ENCODE measurements at regions of chr4 and their contacts with region 1.

Region 1: DNA sequence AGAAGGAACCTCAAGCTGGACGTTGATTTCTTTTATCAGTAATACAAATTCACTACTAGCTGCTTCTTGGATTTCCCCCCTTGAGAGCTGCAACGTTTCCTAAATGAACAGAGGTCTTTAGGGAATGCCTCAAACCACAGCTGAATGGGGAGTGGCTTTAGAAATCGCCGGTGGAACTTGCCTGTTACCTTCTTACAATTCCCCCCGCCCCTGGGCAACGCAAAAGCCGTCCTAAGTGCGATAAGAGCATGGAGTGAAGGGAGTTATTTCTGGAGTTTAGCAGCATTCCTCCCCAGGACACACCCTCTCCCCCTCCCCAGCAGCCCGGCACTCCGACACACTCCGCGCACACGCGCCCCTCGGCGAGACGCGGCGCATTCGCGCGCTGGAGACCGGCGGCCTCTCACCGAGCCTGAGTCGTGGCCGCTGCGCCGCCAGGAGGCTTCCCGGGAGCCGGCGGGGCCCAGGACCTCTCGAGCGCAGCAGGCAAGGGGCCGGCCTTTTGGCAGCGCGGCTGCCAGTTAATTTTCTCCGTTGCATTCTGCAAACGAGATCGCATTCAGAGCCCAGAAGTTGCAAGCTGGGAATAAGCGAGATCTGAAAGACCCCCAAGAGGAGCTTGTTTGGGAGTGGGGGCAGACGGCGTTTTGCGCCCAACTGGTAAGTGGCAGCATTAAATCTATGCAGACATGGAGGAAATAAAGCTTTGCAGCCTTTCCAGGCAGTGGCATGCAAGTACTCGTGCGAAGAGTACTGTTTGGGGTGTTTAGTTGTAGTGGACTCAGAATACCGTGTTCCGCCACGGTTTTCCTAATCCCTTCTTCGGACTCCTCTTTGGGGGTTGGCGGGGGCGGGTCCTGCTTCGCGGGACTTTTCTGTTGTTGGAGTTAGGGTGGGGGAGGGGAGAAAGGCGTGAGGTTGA is 134.7 kb downstream of the PALLD start:
- DNase-seq: peak; percentile 76 to 82
- H3K4me3 ChIP-seq: peak overlapping the region; percentile 54 to 68
- H3K27ac ChIP-seq: peak overlapping the region; percentile 92
- H3K4me1 ChIP-seq: peaks cover 0 to 5% of the 10 kb centered on the region in 2 donors
- H3K27me3 ChIP-seq: no peaks in the 10 kb centered on the region
- CTCF ChIP-seq: peak; percentile 26 to 69 (median 54)
- POLR2A ChIP-seq: peak in 1 of 2 donors; percentile 53

Region 2: GRCh38 chr4:168291242-168291641 is 340.3 kb before region 1 on chr4:
- intact Hi-C with region 1: no loop called
- DNase-seq: no peak
- H3K4me3 ChIP-seq: no peak overlapping the region
- H3K27ac ChIP-seq: no peak overlapping the region
- H3K4me1 ChIP-seq: no peaks in the 10 kb centered on the region
- H3K27me3 ChIP-seq: no peaks in the 10 kb centered on the region
- CTCF ChIP-seq: no peak
- POLR2A ChIP-seq: no peak

Region 3: DNA sequence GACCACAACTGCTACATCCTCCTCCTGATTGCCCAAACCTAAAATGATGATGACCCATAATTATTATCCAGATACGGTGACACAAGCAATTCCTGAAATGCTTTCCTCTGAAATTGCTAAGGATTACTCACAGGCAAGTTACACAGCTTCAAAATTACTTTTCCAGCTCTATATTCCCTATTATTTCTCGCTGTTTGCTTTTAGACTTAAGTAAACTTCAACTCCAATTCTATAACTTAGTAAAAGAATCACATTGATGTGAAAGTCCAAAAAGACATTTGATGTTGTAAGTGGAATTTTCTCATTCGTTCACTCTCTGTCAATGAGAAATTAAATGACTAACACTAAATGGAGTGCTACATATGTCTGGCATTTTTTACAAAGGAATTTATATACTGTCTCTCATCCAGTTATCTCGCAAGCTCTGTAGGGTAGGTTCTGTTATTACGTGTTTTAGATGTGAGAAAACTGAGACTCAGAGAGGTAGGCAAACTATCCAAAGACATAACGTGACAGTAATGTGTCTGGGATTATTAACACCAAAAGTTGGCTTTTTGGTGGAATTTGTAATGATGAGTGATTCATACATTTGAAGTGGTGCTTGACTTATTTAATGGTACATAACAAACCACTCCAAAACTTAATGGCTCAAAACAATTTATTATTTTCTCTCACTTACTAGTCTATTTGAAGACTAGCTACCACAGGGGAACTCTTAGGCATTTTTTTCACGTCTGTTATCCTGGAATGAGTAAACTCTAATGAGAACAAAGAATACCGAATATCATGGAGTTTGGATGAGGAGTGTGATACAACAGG is 103.2 kb before region 1 on chr4:
- intact Hi-C with region 1: no loop called
- DNase-seq: no peak
- H3K4me3 ChIP-seq: no peak overlapping the region
- H3K27ac ChIP-seq: no peak overlapping the region
- H3K4me1 ChIP-seq: no peaks in the 10 kb centered on the region
- H3K27me3 ChIP-seq: no peaks in the 10 kb centered on the region
- CTCF ChIP-seq: no peak
- POLR2A ChIP-seq: no peak

Region 4: GRCh38 chr4:168831919-168832762 is 200.6 kb after region 1 on chr4:
- intact Hi-C with region 1: loop called (anchors 10 kb)
- DNase-seq: peak; percentile 89 to 93
- H3K4me3 ChIP-seq: peak overlapping the region; percentile 62 to 98
- H3K27ac ChIP-seq: peak overlapping the region; percentile 98 to 99
- H3K4me1 ChIP-seq: no peaks in the 10 kb centered on the region
- H3K27me3 ChIP-seq: no peaks in the 10 kb centered on the region
- CTCF ChIP-seq: peak in 1 of 4 experiments; percentile 22
- POLR2A ChIP-seq: peak; percentile 80 to 98